ENCODE measurements at regions of chr9 and their contacts with region 1.

Region 1: GRCh38 chr9:128455849-128456612 is at the start of gene ODF2:
- DNase-seq: peak; percentile 96 to 99 (median 98)
- ATAC-seq: peak; percentile 94
- H3K4me3 ChIP-seq: peak within 1 kb of the TSS; percentile 87
- H3K4me3 Mint-ChIP-seq: peak within 1 kb of the TSS; percentile 85 to 94 (median 90)
- H3K27ac ChIP-seq: peak within 1 kb of the TSS; percentile 88
- H3K27ac Mint-ChIP-seq: peak within 1 kb of the TSS; percentile 76 to 94 (median 90)
- H3K4me1 ChIP-seq: peaks cover 7 to 9% of the 10 kb centered on the region in 2 donors
- H3K4me1 Mint-ChIP-seq: peaks cover 15 to 27% (median 20%) of the 10 kb centered on the region in 7 donors
- H3K27me3 ChIP-seq: no peaks in the 10 kb centered on the region
- H3K27me3 Mint-ChIP-seq: no peaks in the 10 kb centered on the region
- total RNA-seq, gene ODF2: 25.0 to 52.8 (median 30.2) TPM

Region 2: GRCh38 chr9:128275996-128276573 is 179.9 kb before region 1 on chr9 and contains the starts of genes GOLGA2 and SWI5:
- CTCF ChIA-PET with region 1: no interaction called
- POLR2A ChIA-PET with region 1: interaction called, 5 read pairs
- intact Hi-C with region 1: loop called (anchors 1 kb)
- DNase-seq: peak; percentile 98 to 100 (median 100)
- ATAC-seq: peak; percentile 98
- H3K4me3 ChIP-seq: peak within 1 kb of the TSS; percentile 95
- H3K4me3 Mint-ChIP-seq: peak within 1 kb of the TSS; percentile 94 to 98 (median 96)
- H3K27ac ChIP-seq: peak within 1 kb of the TSS; percentile 90
- H3K27ac Mint-ChIP-seq: peak within 1 kb of the TSS; percentile 94 to 98 (median 97)
- H3K4me1 ChIP-seq: peaks cover 16 to 21% of the 10 kb centered on the region in 2 donors
- H3K4me1 Mint-ChIP-seq: peaks cover 24 to 51% (median 46%) of the 10 kb centered on the region in 7 donors
- H3K27me3 ChIP-seq: no peaks in the 10 kb centered on the region
- H3K27me3 Mint-ChIP-seq: peaks cover 0 to 7% (median 0%) of the 10 kb centered on the region in 5 donors
- total RNA-seq, gene GOLGA2: 56.5 to 76.6 (median 70.6) TPM
- total RNA-seq, gene SWI5: 8.7 to 17.4 (median 9.8) TPM

Region 3: DNA sequence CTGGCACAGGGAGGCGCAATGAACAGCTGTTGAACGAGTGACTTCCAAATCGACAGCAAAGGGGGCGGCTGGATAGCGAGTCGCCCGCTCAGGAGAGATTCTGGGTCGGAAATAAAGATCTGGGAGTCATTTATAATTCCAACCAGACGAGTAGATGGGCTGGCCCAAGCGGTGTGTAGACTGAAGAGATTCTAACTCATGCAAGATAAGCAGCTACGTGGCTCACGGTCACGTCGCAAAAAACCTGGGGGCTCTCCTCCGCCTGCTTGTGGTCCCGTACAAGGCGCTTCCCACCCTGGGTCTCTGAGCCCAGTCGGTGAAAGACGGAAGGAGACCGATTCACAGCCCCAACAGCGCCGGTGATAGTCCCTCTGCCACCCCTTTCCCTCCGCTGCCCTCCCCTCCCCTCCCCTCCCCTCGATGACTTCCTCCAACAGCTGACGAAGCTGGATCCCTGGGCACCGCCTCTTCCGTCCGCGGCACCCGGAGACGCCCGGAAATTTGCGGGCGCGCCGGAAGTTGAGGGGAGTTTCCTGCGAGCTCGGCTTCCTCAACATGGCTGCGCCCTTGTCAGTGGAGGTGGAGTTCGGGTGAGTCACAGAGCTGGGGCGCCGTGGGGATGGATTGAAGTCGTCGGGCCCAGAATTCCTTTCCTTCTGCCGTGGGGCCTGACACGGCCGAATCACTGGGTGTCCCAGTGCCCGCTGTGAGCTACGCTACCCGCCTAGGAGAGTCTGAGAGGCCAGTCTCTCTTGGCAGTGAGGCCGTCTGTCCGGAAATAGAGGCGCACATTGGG is 85.0 kb before region 1 on chr9 and contains the start of gene URM1:
- CTCF ChIA-PET with region 1: no interaction called
- POLR2A ChIA-PET with region 1: no interaction called
- intact Hi-C with region 1: loop called (anchors 1 kb)
- DNase-seq: peak; percentile 88 to 97 (median 95)
- ATAC-seq: peak; percentile 98
- H3K4me3 ChIP-seq: peak within 1 kb of the TSS; percentile 92
- H3K4me3 Mint-ChIP-seq: peak within 1 kb of the TSS; percentile 86 to 99 (median 96)
- H3K27ac ChIP-seq: peak within 1 kb of the TSS; percentile 94
- H3K27ac Mint-ChIP-seq: peak within 1 kb of the TSS; percentile 94 to 99 (median 98)
- H3K4me1 ChIP-seq: peaks cover 17% of the 10 kb centered on the region in 2 donors
- H3K4me1 Mint-ChIP-seq: peaks cover 18 to 41% (median 36%) of the 10 kb centered on the region in 7 donors
- H3K27me3 ChIP-seq: no peaks in the 10 kb centered on the region
- H3K27me3 Mint-ChIP-seq: no peaks in the 10 kb centered on the region
- total RNA-seq, gene URM1: 32.3 to 72.4 (median 47.5) TPM

Region 4: GRCh38 chr9:128484686-128485413 is 28.8 kb after region 1 on chr9:
- CTCF ChIA-PET with region 1: no interaction called
- POLR2A ChIA-PET with region 1: no interaction called
- intact Hi-C with region 1: no loop called
- DNase-seq: no peak
- ATAC-seq: no peak
- H3K4me3 ChIP-seq: no peak overlapping the region
- H3K4me3 Mint-ChIP-seq: no peak overlapping the region
- H3K27ac ChIP-seq: no peak overlapping the region
- H3K27ac Mint-ChIP-seq: no peak overlapping the region
- H3K4me1 ChIP-seq: no peaks in the 10 kb centered on the region
- H3K4me1 Mint-ChIP-seq: peaks cover 0 to 2% (median 0%) of the 10 kb centered on the region in 7 donors
- H3K27me3 ChIP-seq: no peaks in the 10 kb centered on the region
- H3K27me3 Mint-ChIP-seq: no peaks in the 10 kb centered on the region

Region 5: DNA sequence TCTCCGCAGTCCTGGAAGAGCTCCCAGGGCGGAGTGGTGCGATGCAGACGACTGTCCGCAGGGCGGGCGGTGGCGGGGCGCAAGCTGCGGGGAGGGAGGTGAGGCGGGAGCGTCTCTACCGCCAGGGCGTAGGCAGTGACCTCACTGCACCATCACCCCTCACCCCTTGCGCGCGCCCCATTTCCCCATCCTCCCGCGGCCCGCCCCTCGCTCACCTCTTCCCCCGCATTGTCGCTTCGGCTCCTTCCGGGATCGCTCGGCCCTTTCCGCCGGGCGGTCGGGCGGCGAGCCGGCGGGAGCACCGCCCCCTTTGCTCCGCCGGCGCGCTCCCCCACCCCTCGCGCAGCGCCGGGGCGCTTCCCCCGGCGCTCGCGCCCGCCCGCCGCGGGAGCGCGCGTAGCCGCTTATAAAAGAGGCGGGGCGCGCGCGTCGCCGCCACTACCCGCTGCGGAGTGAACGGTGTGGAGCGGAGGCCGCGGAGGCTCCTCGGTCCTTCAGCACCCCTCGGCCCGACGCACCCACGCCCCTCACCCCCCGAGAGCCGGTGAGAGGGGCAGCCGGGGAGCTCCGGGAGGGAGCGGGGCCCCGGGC is 96.2 kb after region 1 on chr9 and contains the start of gene SPTAN1:
- CTCF ChIA-PET with region 1: no interaction called
- POLR2A ChIA-PET with region 1: interaction called, 3 read pairs
- intact Hi-C with region 1: loop called (anchors 1 kb)
- DNase-seq: peak; percentile 92 to 98 (median 96)
- ATAC-seq: peak; percentile 94
- H3K4me3 ChIP-seq: peak within 1 kb of the TSS; percentile 84
- H3K4me3 Mint-ChIP-seq: peak within 1 kb of the TSS in 7 of 10 donors; percentile 85 to 94 (median 92)
- H3K27ac ChIP-seq: peak within 1 kb of the TSS; percentile 94
- H3K27ac Mint-ChIP-seq: peak within 1 kb of the TSS; percentile 92 to 98 (median 97)
- H3K4me1 ChIP-seq: peaks cover 44 to 45% of the 10 kb centered on the region in 2 donors
- H3K4me1 Mint-ChIP-seq: peaks cover 15 to 38% (median 34%) of the 10 kb centered on the region in 7 donors
- H3K27me3 ChIP-seq: no peaks in the 10 kb centered on the region
- H3K27me3 Mint-ChIP-seq: no peaks in the 10 kb centered on the region
- total RNA-seq, gene SPTAN1: 336 to 433 (median 375) TPM

Region 6: DNA sequence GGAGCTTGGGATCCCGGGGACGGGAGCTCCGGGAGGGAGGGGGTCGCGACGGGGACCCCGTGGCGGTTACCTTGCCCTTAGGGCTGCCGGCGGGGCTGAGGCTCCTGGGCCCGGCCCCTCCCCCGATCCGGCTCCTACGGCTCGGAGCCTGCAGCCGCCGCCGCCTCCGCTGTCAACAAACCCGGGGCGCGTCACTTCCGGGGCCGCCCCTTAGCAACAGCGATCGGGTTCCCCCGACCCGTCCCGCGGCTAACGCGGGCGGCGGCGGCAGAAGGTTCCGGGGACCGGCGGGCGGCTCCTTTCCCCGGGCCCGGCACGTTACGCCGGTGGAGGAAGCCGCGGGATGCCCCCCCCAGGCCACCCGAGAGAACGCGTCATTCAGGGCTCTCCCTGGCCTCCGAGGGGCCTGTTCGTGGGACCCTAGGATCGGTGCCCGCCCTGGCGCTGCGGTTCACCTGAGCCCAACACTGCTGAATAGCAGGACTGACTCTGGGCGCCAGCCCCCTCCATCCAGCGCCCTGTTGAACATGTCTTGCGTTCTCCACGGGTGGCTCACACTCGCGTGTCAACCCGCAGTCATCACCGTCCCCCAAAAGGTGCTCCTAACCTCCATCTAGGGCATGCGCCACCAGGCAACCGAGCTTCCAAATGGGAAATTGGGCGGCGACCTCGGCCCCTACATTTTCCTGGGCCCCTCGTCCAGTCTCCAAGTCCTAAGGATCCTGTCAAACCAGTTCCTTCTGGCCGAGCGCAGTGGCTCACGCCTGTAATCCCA is 315.9 kb after region 1 on chr9 and contains the start of gene ZER1:
- CTCF ChIA-PET with region 1: no interaction called
- POLR2A ChIA-PET with region 1: no interaction called
- intact Hi-C with region 1: loop called in 1 of 2 experiments (anchors 1 kb)
- DNase-seq: peak; percentile 92 to 98 (median 95)
- ATAC-seq: peak; percentile 97
- H3K4me3 ChIP-seq: peak within 1 kb of the TSS; percentile 97
- H3K4me3 Mint-ChIP-seq: peak within 1 kb of the TSS; percentile 95 to 99 (median 98)
- H3K27ac ChIP-seq: peak within 1 kb of the TSS; percentile 93
- H3K27ac Mint-ChIP-seq: peak within 1 kb of the TSS; percentile 93 to 100 (median 100)
- H3K4me1 ChIP-seq: peaks cover 7 to 12% of the 10 kb centered on the region in 2 donors
- H3K4me1 Mint-ChIP-seq: peaks cover 21 to 40% (median 39%) of the 10 kb centered on the region in 7 donors
- H3K27me3 ChIP-seq: no peaks in the 10 kb centered on the region
- H3K27me3 Mint-ChIP-seq: no peaks in the 10 kb centered on the region
- total RNA-seq, gene ZER1: 22.7 to 51.2 (median 34.7) TPM

Region 7: GRCh38 chr9:129028192-129028957 is 572.3 kb after region 1 on chr9 and contains the start of gene SH3GLB2:
- CTCF ChIA-PET with region 1: no interaction called
- POLR2A ChIA-PET with region 1: no interaction called
- intact Hi-C with region 1: loop called in 1 of 2 experiments (anchors 1 kb)
- DNase-seq: peak in 8 of 9 donors; percentile 81 to 97 (median 88)
- ATAC-seq: peak; percentile 94
- H3K4me3 ChIP-seq: peak within 1 kb of the TSS; percentile 76
- H3K4me3 Mint-ChIP-seq: peak within 1 kb of the TSS; percentile 81 to 92 (median 83)
- H3K27ac ChIP-seq: peak within 1 kb of the TSS; percentile 72
- H3K27ac Mint-ChIP-seq: peak within 1 kb of the TSS; percentile 62 to 90 (median 78)
- H3K4me1 ChIP-seq: peaks cover 13 to 18% of the 10 kb centered on the region in 2 donors
- H3K4me1 Mint-ChIP-seq: peaks cover 13 to 37% (median 25%) of the 10 kb centered on the region in 7 donors
- H3K27me3 ChIP-seq: no peaks in the 10 kb centered on the region
- H3K27me3 Mint-ChIP-seq: no peaks in the 10 kb centered on the region
- total RNA-seq, gene SH3GLB2: 76.3 to 106 (median 86.2) TPM

Measured in naive thymus-derived CD4-positive, alpha-beta T cell (primary cell).